ENCODE measurements at regions of chr7 and their contacts with region 1.

Region 1: DNA sequence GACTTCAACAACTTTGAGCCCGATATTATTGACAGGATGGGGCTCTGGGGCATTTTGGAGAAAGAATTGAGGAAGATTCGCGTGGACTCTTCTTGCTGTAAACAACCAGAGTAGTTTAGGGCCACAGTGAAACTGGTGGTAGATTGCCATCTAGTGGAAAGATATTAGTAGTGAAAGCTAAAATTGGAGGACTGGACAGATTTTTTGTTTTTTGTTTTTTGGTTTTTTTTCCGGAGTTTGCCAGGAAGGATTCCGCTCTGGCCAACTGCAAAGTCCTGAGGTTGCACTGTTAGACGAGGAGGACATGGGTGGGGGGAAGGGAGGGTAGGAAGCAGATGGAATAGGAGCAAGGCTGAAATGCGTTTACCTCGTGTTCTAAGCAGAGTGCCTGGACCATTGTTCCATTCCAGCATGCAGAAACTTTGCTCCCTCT is 11.7 kb downstream of the NOBOX start:
- DNase-seq: peak; percentile 56 to 67 (median 61)
- ATAC-seq: peak; percentile 94
- H3K4me3 ChIP-seq: no peak overlapping the region
- H3K27ac ChIP-seq: no peak overlapping the region
- H3K4me1 ChIP-seq: no peaks in the 10 kb centered on the region
- H3K27me3 ChIP-seq: no peaks in the 10 kb centered on the region; a peak in 1 of 5 replicates
- CTCF ChIP-seq: peak; percentile 65 to 92 (median 73); a peak in 5 of 6 replicates
- EP300 ChIP-seq: no peak
- POLR2A ChIP-seq: no peak
- RAD21 ChIP-seq: peak; percentile 84 to 88

Region 2: GRCh38 chr7:144174613-144175012 is 217.2 kb before region 1 on chr7:
- CTCF ChIA-PET with region 1: interaction called, 4 read pairs
- POLR2A ChIA-PET with region 1: no interaction called
- in situ Hi-C with region 1: no loop called
- intact Hi-C with region 1: loop called (anchors 10 kb)
- DNase-seq: no peak
- ATAC-seq: no peak
- H3K4me3 ChIP-seq: no peak overlapping the region
- H3K27ac ChIP-seq: no peak overlapping the region
- H3K4me1 ChIP-seq: no peaks in the 10 kb centered on the region
- H3K27me3 ChIP-seq: no peaks in the 10 kb centered on the region
- CTCF ChIP-seq: no peak
- EP300 ChIP-seq: no peak
- POLR2A ChIP-seq: no peak
- RAD21 ChIP-seq: no peak

Region 3: GRCh38 chr7:144468990-144469732 is 77.3 kb after region 1 on chr7:
- CTCF ChIA-PET with region 1: no interaction called
- POLR2A ChIA-PET with region 1: no interaction called
- in situ Hi-C with region 1: no loop called
- intact Hi-C with region 1: no loop called
- DNase-seq: no peak
- ATAC-seq: no peak
- H3K4me3 ChIP-seq: no peak overlapping the region
- H3K27ac ChIP-seq: no peak overlapping the region
- H3K4me1 ChIP-seq: no peaks in the 10 kb centered on the region
- H3K27me3 ChIP-seq: no peaks in the 10 kb centered on the region
- CTCF ChIP-seq: no peak
- EP300 ChIP-seq: no peak
- POLR2A ChIP-seq: no peak
- RAD21 ChIP-seq: no peak

Region 4: GRCh38 chr7:144565586-144565985 is 173.7 kb after region 1 on chr7:
- CTCF ChIA-PET with region 1: no interaction called
- POLR2A ChIA-PET with region 1: no interaction called
- in situ Hi-C with region 1: no loop called
- intact Hi-C with region 1: no loop called
- DNase-seq: no peak
- ATAC-seq: no peak
- H3K4me3 ChIP-seq: no peak overlapping the region
- H3K27ac ChIP-seq: no peak overlapping the region
- H3K4me1 ChIP-seq: no peaks in the 10 kb centered on the region
- H3K27me3 ChIP-seq: no peaks in the 10 kb centered on the region
- CTCF ChIP-seq: no peak
- EP300 ChIP-seq: no peak
- POLR2A ChIP-seq: no peak
- RAD21 ChIP-seq: no peak